RWPE1 (cell line): ENCODE measurements at regions of chr11 and their contacts with region 1.

Region 1: GRCh38 chr11:125968354-125968753 is 22.5 kb downstream of the VSIG10L2 start:
- DNase-seq: peak; percentile 61
- H3K27ac ChIP-seq: no peak overlapping the region
- CTCF ChIP-seq: no peak

Region 2: DNA sequence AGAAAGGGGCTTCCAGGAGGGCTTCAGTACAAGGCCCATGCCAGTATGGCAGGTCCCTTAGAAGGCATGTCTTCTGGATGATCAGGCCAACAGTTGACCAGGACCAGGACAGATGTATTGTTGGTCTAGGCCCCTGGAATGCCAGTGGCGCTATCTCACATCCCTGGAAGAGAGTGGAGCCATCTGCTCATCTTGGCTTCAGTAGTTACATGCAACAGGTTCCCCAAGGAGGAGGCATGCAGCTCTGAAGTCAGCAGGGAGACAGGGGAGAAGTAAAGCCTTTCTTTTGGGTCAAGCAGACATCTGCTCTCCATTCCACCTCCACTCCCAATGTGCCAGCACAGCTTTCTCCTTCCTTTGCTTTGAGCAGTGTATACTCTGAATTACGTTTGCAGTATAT is 788.1 kb after region 1 on chr11:
- CTCF ChIA-PET with region 1: interaction called, 15 read pairs
- POLR2A ChIA-PET with region 1: no interaction called
- DNase-seq: no peak
- H3K27ac ChIP-seq: no peak overlapping the region
- CTCF ChIP-seq: no peak